ENCODE measurements at regions of chr2 and their contacts with region 1.

Region 1: GRCh38 chr2:219104107-219105035 is 43.6 kb upstream of the IHH start:
- DNase-seq: peak; percentile 69
- CTCF ChIP-seq: peak; percentile 31

Region 2: GRCh38 chr2:219087361-219087760 is 17.0 kb before region 1 on chr2:
- CTCF ChIA-PET with region 1: interaction called, 24 read pairs
- POLR2A ChIA-PET with region 1: no interaction called
- DNase-seq: no peak
- CTCF ChIP-seq: no peak

Region 3: GRCh38 chr2:219186754-219187456 is 82.5 kb after region 1 on chr2:
- CTCF ChIA-PET with region 1: no interaction called
- POLR2A ChIA-PET with region 1: no interaction called
- DNase-seq: peak; percentile 39
- CTCF ChIP-seq: no peak

Measured in GM10248 (cell line).